Ovary (tissue), 10 donors: ENCODE measurements at regions of chr15 and their contacts with region 1.

Region 1: DNA sequence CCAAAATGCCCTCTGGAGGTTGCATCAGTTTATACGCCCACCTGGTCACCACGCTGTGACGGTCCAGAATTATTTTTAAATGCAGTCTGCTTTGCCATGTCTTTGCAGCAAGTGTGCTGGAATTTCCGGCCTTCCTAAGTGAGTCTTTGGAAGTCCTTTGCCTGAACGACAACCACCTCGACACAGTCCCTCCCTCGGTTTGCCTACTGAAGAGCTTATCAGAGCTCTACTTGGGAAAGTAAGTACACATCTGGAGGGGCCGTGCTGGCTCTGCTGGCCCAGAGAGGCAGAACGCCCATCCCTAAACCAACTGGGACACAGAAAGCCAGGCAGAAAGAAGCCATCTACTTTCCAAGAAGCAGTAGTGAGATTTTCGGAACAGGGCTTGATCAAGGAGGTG is 101.8 kb downstream of the LRRK1 start:
- DNase-seq: no peak
- H3K4me3 ChIP-seq: no peak overlapping the region
- H3K27ac ChIP-seq: no peak overlapping the region
- H3K4me1 ChIP-seq: peaks cover 5% of the 10 kb centered on the region
- H3K27me3 ChIP-seq: no peaks in the 10 kb centered on the region
- CTCF ChIP-seq: no peak
- EP300 ChIP-seq: no peak
- POLR2A ChIP-seq: no peak

Region 2: DNA sequence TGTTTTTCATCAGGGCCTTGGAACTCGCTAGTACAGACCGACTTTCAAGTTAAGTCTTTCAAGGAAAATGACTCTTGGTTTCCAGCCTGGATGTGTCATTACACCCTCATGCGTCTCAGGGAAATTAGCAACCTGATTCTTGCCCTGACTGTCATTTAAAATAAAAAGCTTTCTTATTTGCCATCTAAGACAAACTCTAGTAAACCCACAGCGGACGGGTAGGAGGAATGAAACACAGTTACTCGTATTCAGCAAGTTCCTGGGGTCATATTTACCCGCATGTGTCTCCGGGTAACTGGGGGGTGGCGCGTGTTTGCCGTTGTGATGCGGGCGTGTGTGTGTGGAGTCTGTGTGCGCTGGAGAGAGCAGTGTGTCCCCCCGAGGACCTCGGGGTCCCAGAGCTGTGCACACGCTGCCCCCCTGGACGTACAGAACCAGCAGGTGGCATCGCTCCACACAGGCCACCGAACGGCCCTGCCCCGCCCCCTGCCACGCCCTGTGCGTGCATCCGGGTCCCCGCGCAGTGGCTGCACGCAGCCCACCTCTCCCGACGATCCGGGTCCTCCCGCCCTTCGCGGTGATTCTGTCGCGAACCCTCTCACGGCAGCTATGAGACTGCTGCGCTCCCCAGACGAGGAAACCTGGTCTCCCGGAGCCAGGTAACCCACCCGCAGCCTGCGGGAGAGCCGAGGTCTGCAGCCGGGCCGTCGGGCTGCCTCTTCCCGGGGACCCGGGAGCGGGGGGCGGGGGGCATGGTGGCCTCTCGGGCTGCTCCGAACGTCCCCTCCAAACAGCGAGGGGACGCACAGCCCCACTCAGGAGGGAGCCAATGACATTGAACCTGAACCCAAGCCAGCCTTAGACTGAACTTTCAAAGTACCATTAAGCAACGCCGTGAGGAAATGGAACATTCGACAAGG is 171.4 kb before region 1 on chr15:
- intact Hi-C with region 1: no loop called
- DNase-seq: peak in 4 of 5 donors; percentile 18 to 63 (median 46)
- H3K4me3 ChIP-seq: peak overlapping the region; percentile 49
- H3K27ac ChIP-seq: no peak overlapping the region
- H3K4me1 ChIP-seq: peaks cover 4% of the 10 kb centered on the region
- H3K27me3 ChIP-seq: no peaks in the 10 kb centered on the region
- CTCF ChIP-seq: no peak
- EP300 ChIP-seq: no peak
- POLR2A ChIP-seq: no peak

Region 3: DNA sequence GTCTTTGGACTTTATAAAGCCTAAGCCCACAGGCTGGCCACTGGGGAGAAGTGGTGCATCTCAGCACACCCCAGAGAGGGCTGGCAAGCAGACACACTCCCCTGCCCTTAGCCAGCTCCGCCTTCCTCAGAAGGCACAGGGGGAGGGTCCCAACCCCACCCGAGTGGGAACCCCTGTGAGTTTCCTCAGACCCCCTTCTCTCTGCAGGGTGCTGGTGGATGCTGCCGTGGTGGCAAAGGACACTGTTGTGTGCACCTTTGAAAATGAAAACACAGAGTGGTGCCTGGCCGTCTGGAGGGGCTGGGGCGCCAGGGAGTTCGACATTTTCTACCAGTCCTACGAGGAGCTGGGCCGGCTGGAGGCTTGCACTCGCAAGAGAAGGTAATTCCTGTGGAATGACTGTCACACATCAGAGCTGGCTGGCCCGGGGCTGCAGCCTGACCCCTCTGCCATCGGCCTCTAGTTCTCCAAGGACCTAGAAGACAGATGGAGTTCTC is 47.6 kb after region 1 on chr15:
- intact Hi-C with region 1: no loop called
- DNase-seq: peak in 2 of 5 donors; percentile 12 to 20
- H3K4me3 ChIP-seq: no peak overlapping the region
- H3K27ac ChIP-seq: peak overlapping the region in 1 of 2 donors; percentile 70
- H3K4me1 ChIP-seq: peaks cover 22% of the 10 kb centered on the region
- H3K27me3 ChIP-seq: no peaks in the 10 kb centered on the region
- CTCF ChIP-seq: no peak
- EP300 ChIP-seq: no peak
- POLR2A ChIP-seq: no peak

Region 4: DNA sequence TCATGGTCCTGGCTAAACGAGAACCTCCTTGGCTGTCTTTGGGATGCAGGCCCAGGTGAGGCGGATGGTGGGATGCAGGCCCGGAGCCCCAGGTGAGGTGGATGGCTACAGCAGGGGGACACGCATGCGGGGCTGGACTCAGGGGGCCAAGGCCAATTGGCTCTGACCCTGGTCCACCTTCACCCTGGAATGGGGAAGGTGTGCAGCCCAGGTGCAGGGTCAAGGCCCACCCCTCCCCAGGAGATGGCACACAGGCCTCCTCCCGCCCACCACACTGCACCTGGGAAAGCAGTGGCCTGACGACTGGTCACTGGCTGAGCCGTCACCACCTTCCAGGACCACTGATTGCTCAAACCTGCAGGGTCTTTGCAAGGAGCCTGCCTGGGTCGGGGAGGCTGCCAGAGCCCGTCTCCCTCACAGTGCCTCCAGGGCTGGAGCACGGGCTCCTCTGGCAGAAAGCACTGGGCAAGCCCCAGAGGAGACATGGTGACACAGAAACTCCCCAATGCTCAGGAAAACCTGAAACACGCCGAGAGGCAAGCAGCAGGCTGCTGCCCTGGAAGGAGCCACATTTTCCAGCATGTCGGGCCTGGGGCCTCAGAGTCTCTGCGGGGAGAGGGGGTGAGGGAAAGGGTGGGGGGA is 57.9 kb after region 1 on chr15:
- intact Hi-C with region 1: loop called in 1 of 4 experiments (anchors 1 kb)
- DNase-seq: peak in 1 of 5 donors; percentile 13
- H3K4me3 ChIP-seq: no peak overlapping the region
- H3K27ac ChIP-seq: no peak overlapping the region
- H3K4me1 ChIP-seq: peaks cover 2% of the 10 kb centered on the region
- H3K27me3 ChIP-seq: no peaks in the 10 kb centered on the region
- CTCF ChIP-seq: no peak
- EP300 ChIP-seq: no peak
- POLR2A ChIP-seq: no peak